CD8-positive, alpha-beta memory T cell (primary cell): ENCODE measurements at regions of chr17 and their contacts with region 1.

Region 1: GRCh38 chr17:16363749-16364536 is 10.7 kb upstream of the CENPV start:
- DNase-seq: peak; percentile 52 to 82 (median 61)
- H3K4me3 ChIP-seq: no peak overlapping the region
- H3K4me3 Mint-ChIP-seq: no peak overlapping the region
- H3K27ac ChIP-seq: no peak overlapping the region
- H3K27ac Mint-ChIP-seq: peak overlapping the region in 1 of 8 donors; percentile 57
- H3K4me1 ChIP-seq: no peaks in the 10 kb centered on the region
- H3K4me1 Mint-ChIP-seq: peaks cover 0 to 5% (median 2%) of the 10 kb centered on the region in 3 donors
- H3K27me3 ChIP-seq: no peaks in the 10 kb centered on the region
- H3K27me3 Mint-ChIP-seq: no peaks in the 10 kb centered on the region

Region 2: GRCh38 chr17:16313139-16314090 is 50.5 kb before region 1 on chr17:
- CTCF ChIA-PET with region 1: no interaction called
- POLR2A ChIA-PET with region 1: no interaction called
- DNase-seq: no peak
- H3K4me3 ChIP-seq: no peak overlapping the region
- H3K4me3 Mint-ChIP-seq: peak overlapping the region in 2 of 7 donors; percentile 45 to 54
- H3K27ac ChIP-seq: no peak overlapping the region
- H3K27ac Mint-ChIP-seq: no peak overlapping the region
- H3K4me1 ChIP-seq: peaks cover 5% of the 10 kb centered on the region
- H3K4me1 Mint-ChIP-seq: peaks cover 11 to 29% (median 27%) of the 10 kb centered on the region in 3 donors
- H3K27me3 ChIP-seq: no peaks in the 10 kb centered on the region
- H3K27me3 Mint-ChIP-seq: no peaks in the 10 kb centered on the region

Region 3: GRCh38 chr17:16342979-16343378 is 21.0 kb before region 1 on chr17:
- CTCF ChIA-PET with region 1: interaction called, 68 read pairs
- POLR2A ChIA-PET with region 1: no interaction called
- DNase-seq: no peak
- H3K4me3 ChIP-seq: no peak overlapping the region
- H3K4me3 Mint-ChIP-seq: no peak overlapping the region
- H3K27ac ChIP-seq: no peak overlapping the region
- H3K27ac Mint-ChIP-seq: peak overlapping the region in 2 of 8 donors; percentile 62 to 81
- H3K4me1 ChIP-seq: no peaks in the 10 kb centered on the region
- H3K4me1 Mint-ChIP-seq: no peaks in the 10 kb centered on the region
- H3K27me3 ChIP-seq: no peaks in the 10 kb centered on the region
- H3K27me3 Mint-ChIP-seq: no peaks in the 10 kb centered on the region

Region 4: DNA sequence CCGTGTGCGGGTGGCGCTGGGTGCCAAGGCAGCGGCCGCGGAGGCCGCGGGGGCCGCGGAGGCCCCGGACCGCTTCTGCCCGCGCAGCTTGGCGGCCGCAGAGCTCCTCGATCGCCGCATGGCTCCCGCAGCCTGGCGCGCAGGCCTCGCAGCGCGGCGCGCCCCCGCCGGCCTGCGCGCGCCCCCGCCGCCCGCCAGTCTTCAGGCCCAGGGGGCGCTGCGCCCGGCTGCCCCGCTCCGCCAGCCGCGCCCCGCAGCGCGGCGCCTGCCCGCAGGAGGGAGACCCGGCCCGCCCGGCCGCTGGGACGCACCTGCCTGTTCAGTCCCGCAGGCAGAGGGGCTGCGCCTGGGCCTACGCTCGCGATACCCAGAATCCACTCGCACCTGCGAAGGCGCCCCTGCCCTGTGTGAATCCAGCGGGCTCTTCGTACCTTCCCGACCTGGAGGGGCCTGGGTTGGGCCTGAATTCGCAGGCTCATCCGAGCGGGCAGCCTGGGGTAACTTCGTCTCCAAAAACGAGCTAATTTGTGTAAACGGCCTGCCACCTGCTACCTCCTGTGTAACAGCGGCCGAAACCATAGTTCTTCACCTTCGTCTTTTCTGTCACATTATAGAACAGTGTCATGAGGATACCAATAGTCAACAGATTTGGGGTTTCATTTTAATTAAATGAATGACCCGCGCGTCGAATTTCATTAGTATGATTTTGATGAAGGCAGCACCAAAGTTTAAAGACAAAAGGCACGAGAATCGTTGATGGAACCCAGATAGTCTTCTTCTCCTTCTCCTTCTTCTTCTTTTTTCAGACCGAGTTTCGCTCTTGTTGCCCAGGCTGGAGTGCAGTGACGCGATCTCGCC is 10.4 kb before region 1 on chr17 and contains the start of gene CENPV:
- CTCF ChIA-PET with region 1: interaction called, 68 read pairs
- POLR2A ChIA-PET with region 1: interaction called, 5 read pairs
- DNase-seq: peak; percentile 56 to 79 (median 67)
- H3K4me3 ChIP-seq: peak within 1 kb of the TSS; percentile 69
- H3K4me3 Mint-ChIP-seq: peak within 1 kb of the TSS; percentile 93 to 98 (median 94)
- H3K27ac ChIP-seq: peak within 1 kb of the TSS; percentile 31
- H3K27ac Mint-ChIP-seq: peak within 1 kb of the TSS; percentile 57 to 96 (median 80)
- H3K4me1 ChIP-seq: peaks cover 13% of the 10 kb centered on the region
- H3K4me1 Mint-ChIP-seq: peaks cover 17 to 21% (median 20%) of the 10 kb centered on the region in 3 donors
- H3K27me3 ChIP-seq: no peaks in the 10 kb centered on the region
- H3K27me3 Mint-ChIP-seq: peaks cover 0 to 2% of the 10 kb centered on the region in 2 donors
- total RNA-seq, gene CENPV: 53.4 to 56.4 TPM

Region 5: DNA sequence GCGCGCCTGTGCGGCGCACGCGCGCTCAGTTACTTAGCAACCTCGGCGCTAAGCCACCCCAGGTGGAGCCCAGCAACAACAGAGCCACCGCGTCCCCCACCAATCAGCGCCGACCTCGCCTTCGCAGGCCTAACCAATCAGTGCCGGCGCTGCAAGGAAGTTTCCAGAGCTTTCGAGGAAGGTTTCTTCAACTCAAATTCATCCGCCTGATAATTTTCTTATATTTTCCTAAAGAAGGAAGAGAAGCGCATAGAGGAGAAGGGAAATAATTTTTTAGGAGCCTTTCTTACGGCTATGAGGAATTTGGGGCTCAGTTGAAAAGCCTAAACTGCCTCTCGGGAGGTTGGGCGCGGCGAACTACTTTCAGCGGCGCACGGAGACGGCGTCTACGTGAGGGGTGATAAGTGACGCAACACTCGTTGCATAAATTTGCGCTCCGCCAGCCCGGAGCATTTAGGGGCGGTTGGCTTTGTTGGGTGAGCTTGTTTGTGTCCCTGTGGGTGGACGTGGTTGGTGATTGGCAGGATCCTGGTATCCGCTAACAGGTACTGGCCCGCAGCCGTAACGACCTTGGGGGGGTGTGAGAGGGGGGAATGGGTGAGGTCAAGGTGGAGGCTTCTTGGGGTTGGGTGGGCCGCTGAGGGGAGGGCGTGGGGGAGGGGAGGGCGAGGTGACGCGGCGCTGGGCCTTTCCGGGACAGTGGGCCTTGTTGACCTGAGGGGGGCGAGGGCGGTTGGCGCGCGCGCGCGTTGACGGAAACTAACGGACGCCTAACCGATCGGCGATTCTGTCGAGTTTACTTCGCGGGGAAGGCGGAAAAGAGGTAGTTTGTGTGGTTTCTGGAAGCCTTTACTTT is 16.9 kb after region 1 on chr17 and contains the start of gene UBB:
- CTCF ChIA-PET with region 1: interaction called, 22 read pairs
- POLR2A ChIA-PET with region 1: interaction called, 8 read pairs
- DNase-seq: peak; percentile 92 to 98 (median 94)
- H3K4me3 ChIP-seq: peak within 1 kb of the TSS; percentile 87
- H3K4me3 Mint-ChIP-seq: peak within 1 kb of the TSS; percentile 87 to 93 (median 91)
- H3K27ac ChIP-seq: peak within 1 kb of the TSS; percentile 96
- H3K27ac Mint-ChIP-seq: peak within 1 kb of the TSS; percentile 95 to 99 (median 98)
- H3K4me1 ChIP-seq: peaks cover 14% of the 10 kb centered on the region
- H3K4me1 Mint-ChIP-seq: peaks cover 34 to 47% (median 45%) of the 10 kb centered on the region in 3 donors
- H3K27me3 ChIP-seq: no peaks in the 10 kb centered on the region
- H3K27me3 Mint-ChIP-seq: peaks cover 0 to 7% of the 10 kb centered on the region in 2 donors
- total RNA-seq, gene UBB: 1,678 to 1,690 TPM

Region 6: GRCh38 chr17:16415031-16415924 is 51.3 kb after region 1 on chr17 and contains the start of gene TRPV2:
- CTCF ChIA-PET with region 1: interaction called, 30 read pairs
- POLR2A ChIA-PET with region 1: no interaction called
- DNase-seq: peak; percentile 30 to 71 (median 50)
- H3K4me3 ChIP-seq: peak within 1 kb of the TSS; percentile 96
- H3K4me3 Mint-ChIP-seq: peak within 1 kb of the TSS; percentile 90 to 100 (median 99)
- H3K27ac ChIP-seq: peak within 1 kb of the TSS; percentile 95
- H3K27ac Mint-ChIP-seq: peak within 1 kb of the TSS; percentile 95 to 100 (median 99)
- H3K4me1 ChIP-seq: peaks cover 50% of the 10 kb centered on the region
- H3K4me1 Mint-ChIP-seq: peaks cover 44 to 54% (median 52%) of the 10 kb centered on the region in 3 donors
- H3K27me3 ChIP-seq: no peaks in the 10 kb centered on the region
- H3K27me3 Mint-ChIP-seq: peaks cover 0 to 1% of the 10 kb centered on the region in 2 donors
- total RNA-seq, gene TRPV2: 60.0 to 67.3 TPM

Region 7: DNA sequence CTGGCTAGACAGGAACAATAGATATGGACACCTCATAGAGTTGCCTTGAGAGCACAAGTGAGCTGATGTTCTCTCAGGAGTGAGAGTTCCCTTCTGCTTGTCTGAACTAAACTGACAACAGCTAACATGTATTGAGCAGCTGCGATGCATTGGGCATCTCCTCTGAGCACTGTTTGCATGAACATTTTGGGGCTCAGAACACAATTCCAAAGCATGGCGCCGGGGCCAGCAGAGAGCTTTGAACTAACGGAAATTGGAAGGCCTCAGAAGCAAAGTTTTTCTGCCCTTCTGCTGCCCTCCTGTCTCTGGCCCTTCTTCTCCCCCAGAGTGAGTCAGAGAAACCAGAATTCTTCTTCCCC is 89.5 kb after region 1 on chr17:
- CTCF ChIA-PET with region 1: interaction called, 20 read pairs
- POLR2A ChIA-PET with region 1: no interaction called
- DNase-seq: no peak
- H3K4me3 ChIP-seq: no peak overlapping the region
- H3K4me3 Mint-ChIP-seq: peak overlapping the region in 1 of 7 donors; percentile 21
- H3K27ac ChIP-seq: no peak overlapping the region
- H3K27ac Mint-ChIP-seq: peak overlapping the region in 5 of 8 donors; percentile 8 to 79 (median 51)
- H3K4me1 ChIP-seq: no peaks in the 10 kb centered on the region
- H3K4me1 Mint-ChIP-seq: peaks cover 6 to 10% (median 7%) of the 10 kb centered on the region in 3 donors
- H3K27me3 ChIP-seq: no peaks in the 10 kb centered on the region
- H3K27me3 Mint-ChIP-seq: no peaks in the 10 kb centered on the region

Region 8: GRCh38 chr17:16521070-16521727 is 157.3 kb after region 1 on chr17:
- CTCF ChIA-PET with region 1: interaction called, 54 read pairs
- POLR2A ChIA-PET with region 1: no interaction called
- DNase-seq: peak; percentile 31 to 81 (median 59)
- H3K4me3 ChIP-seq: no peak overlapping the region
- H3K4me3 Mint-ChIP-seq: no peak overlapping the region
- H3K27ac ChIP-seq: no peak overlapping the region
- H3K27ac Mint-ChIP-seq: peak overlapping the region in 1 of 8 donors; percentile 6
- H3K4me1 ChIP-seq: peaks cover 5% of the 10 kb centered on the region
- H3K4me1 Mint-ChIP-seq: peaks cover 0 to 4% (median 2%) of the 10 kb centered on the region in 3 donors
- H3K27me3 ChIP-seq: peaks cover 6% of the 10 kb centered on the region
- H3K27me3 Mint-ChIP-seq: peaks cover 25 to 63% of the 10 kb centered on the region in 2 donors